GM12878 (cell line): ENCODE measurements at regions of chr3 and their contacts with region 1.

Region 1: GRCh38 chr3:145776782-145777408 is 384.1 kb downstream of the PLOD2 start:
- DNase-seq: peak; percentile 16
- ATAC-seq: peak; percentile 90
- H3K4me3 ChIP-seq: no peak overlapping the region
- H3K27ac ChIP-seq: no peak overlapping the region
- H3K4me1 ChIP-seq: no peaks in the 10 kb centered on the region
- H3K27me3 ChIP-seq: no peaks in the 10 kb centered on the region
- CTCF ChIP-seq: peak; percentile 57 to 75 (median 60); a peak in 5 of 6 replicates
- EP300 ChIP-seq: no peak
- POLR2A ChIP-seq: no peak
- RAD21 ChIP-seq: peak; percentile 59

Region 2: GRCh38 chr3:145857956-145858355 is 81.1 kb after region 1 on chr3:
- CTCF ChIA-PET with region 1: no interaction called
- POLR2A ChIA-PET with region 1: no interaction called
- RAD21 ChIA-PET with region 1: no interaction called
- SMC1A ChIA-PET with region 1: no interaction called
- in situ Hi-C with region 1: no loop called
- intact Hi-C with region 1: no loop called
- DNase-seq: peak; percentile 4
- ATAC-seq: peak; percentile 97
- H3K4me3 ChIP-seq: no peak overlapping the region
- H3K27ac ChIP-seq: no peak overlapping the region
- H3K4me1 ChIP-seq: no peaks in the 10 kb centered on the region
- H3K27me3 ChIP-seq: no peaks in the 10 kb centered on the region
- CTCF ChIP-seq: no peak
- EP300 ChIP-seq: no peak
- POLR2A ChIP-seq: no peak
- RAD21 ChIP-seq: no peak

Region 3: GRCh38 chr3:146026547-146026946 is 249.7 kb after region 1 on chr3:
- CTCF ChIA-PET with region 1: interaction called, 13 read pairs
- POLR2A ChIA-PET with region 1: no interaction called
- RAD21 ChIA-PET with region 1: interaction called, 6 read pairs
- SMC1A ChIA-PET with region 1: interaction called, 4 read pairs
- in situ Hi-C with region 1: no loop called
- intact Hi-C with region 1: no loop called
- DNase-seq: no peak
- ATAC-seq: no peak
- H3K4me3 ChIP-seq: no peak overlapping the region
- H3K27ac ChIP-seq: no peak overlapping the region
- H3K4me1 ChIP-seq: no peaks in the 10 kb centered on the region
- H3K27me3 ChIP-seq: no peaks in the 10 kb centered on the region
- CTCF ChIP-seq: no peak; a peak in 1 of 6 replicates
- EP300 ChIP-seq: no peak
- POLR2A ChIP-seq: no peak
- RAD21 ChIP-seq: no peak